Activated CD4-positive, alpha-beta T cell treated with anti-CD3 and anti-CD28 coated beads for 36 hours (primary cell): ENCODE measurements at regions of chr7 and their contacts with region 1.

Region 1: GRCh38 chr7:55641273-55641691 is 69.0 kb upstream of the VOPP1 start:
- DNase-seq: peak; percentile 45
- ATAC-seq: peak; percentile 89
- H3K4me3 Mint-ChIP-seq: no peak overlapping the region
- H3K27ac Mint-ChIP-seq: no peak overlapping the region
- H3K4me1 Mint-ChIP-seq: peaks cover 9% of the 10 kb centered on the region
- H3K27me3 Mint-ChIP-seq: peaks cover 2% of the 10 kb centered on the region

Region 2: DNA sequence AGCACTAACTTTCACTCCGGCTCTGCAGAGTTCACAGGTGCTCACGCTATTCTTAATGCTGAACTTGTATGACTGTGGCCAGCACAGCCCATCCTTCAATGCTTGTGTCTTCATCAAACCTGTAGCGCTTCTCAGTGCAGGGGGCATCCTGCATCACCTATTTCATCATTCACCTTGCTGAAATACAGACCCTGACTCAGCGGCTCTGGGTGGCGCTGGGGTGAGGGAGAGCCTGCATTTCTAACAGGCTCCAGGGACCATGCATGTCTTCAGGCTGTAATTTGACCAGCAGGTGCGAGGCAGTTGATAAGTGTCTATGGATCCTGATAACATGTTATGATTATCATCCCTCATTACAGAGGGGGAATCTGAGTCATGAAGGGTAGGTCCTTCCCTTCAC is 158.2 kb before region 1 on chr7:
- CTCF ChIA-PET with region 1: no interaction called
- POLR2A ChIA-PET with region 1: no interaction called
- intact Hi-C with region 1: no loop called
- DNase-seq: no peak
- ATAC-seq: peak; percentile 24
- H3K4me3 Mint-ChIP-seq: no peak overlapping the region
- H3K27ac Mint-ChIP-seq: peak overlapping the region; percentile 63
- H3K4me1 Mint-ChIP-seq: peaks cover 73% of the 10 kb centered on the region
- H3K27me3 Mint-ChIP-seq: no peaks in the 10 kb centered on the region

Region 3: GRCh38 chr7:55629051-55629677 is 12.1 kb before region 1 on chr7:
- CTCF ChIA-PET with region 1: interaction called, 11 read pairs
- POLR2A ChIA-PET with region 1: no interaction called
- intact Hi-C with region 1: no loop called
- DNase-seq: no peak
- ATAC-seq: no peak
- H3K4me3 Mint-ChIP-seq: no peak overlapping the region
- H3K27ac Mint-ChIP-seq: no peak overlapping the region
- H3K4me1 Mint-ChIP-seq: no peaks in the 10 kb centered on the region
- H3K27me3 Mint-ChIP-seq: peaks cover 9% of the 10 kb centered on the region

Region 4: DNA sequence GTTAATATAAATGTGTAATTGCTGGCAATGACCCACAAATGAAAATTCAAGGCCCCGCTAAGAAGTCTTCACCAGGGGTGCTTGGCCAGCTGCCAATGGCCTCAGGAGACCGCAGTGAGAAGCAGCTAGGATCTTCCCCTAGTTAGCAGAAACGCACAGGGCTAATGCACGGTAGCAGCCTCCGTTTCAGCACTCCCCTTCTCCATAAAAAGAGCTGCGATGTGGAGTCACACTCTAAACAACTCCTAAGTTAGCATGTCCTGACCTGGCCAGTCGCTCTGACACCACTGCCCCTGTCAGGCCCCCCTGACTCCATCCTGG is 82.3 kb after region 1 on chr7:
- CTCF ChIA-PET with region 1: no interaction called
- POLR2A ChIA-PET with region 1: no interaction called
- intact Hi-C with region 1: loop called in 1 of 2 experiments (anchors 1 kb)
- DNase-seq: no peak
- ATAC-seq: no peak
- H3K4me3 Mint-ChIP-seq: no peak overlapping the region
- H3K27ac Mint-ChIP-seq: no peak overlapping the region
- H3K4me1 Mint-ChIP-seq: no peaks in the 10 kb centered on the region
- H3K27me3 Mint-ChIP-seq: no peaks in the 10 kb centered on the region

Region 5: GRCh38 chr7:56074371-56074791 is 433.1 kb after region 1 on chr7:
- CTCF ChIA-PET with region 1: interaction called, 14 read pairs
- POLR2A ChIA-PET with region 1: no interaction called
- intact Hi-C with region 1: loop called in 1 of 2 experiments (anchors 1 kb)
- DNase-seq: peak; percentile 78
- ATAC-seq: peak; percentile 88
- H3K4me3 Mint-ChIP-seq: no peak overlapping the region
- H3K27ac Mint-ChIP-seq: peak overlapping the region; percentile 11
- H3K4me1 Mint-ChIP-seq: peaks cover 6% of the 10 kb centered on the region
- H3K27me3 Mint-ChIP-seq: no peaks in the 10 kb centered on the region